A549 (cell line): ENCODE measurements at regions of chr20 and their contacts with region 1.

Region 1: DNA sequence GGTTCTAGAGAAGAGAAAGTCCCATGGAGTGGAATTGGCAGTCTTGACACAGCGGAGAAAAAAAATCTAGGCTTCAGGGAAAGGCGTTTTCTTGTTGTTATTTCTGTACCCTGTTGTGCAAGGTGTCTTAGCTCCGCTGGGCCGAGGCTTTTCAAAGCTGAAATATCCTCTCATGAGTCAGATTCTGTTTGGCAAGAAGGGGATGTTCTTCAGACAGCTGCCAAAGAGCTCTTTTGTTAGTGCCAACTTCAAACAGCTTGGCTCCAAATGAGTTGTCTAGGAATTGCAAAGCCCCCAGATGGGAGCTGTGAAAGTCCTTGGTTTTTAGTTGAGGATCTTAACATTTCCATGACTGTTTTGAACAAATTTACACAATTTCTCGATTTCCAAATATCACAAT is 45.6 kb downstream of the LRRN4 start:
- DNase-seq: peak; percentile 45 to 78
- ATAC-seq: 0 out of 6 replicates have a peak, but pooled peaks of 1 of the 2 experiments have one; percentile 36
- H3K4me3 ChIP-seq: peak overlapping the region; percentile 70; the same call in 2 of the 3 replicates
- H3K27ac ChIP-seq: peak overlapping the region in 1 of 2 experiments; percentile 8; a peak in 3 of 6 replicates
- H3K4me1 ChIP-seq: peaks cover 27% of the 10 kb centered on the region
- CTCF ChIP-seq: no peak
- EP300 ChIP-seq: no peak
- POLR2A ChIP-seq: no peak
- RAD21 ChIP-seq: no peak

Region 2: DNA sequence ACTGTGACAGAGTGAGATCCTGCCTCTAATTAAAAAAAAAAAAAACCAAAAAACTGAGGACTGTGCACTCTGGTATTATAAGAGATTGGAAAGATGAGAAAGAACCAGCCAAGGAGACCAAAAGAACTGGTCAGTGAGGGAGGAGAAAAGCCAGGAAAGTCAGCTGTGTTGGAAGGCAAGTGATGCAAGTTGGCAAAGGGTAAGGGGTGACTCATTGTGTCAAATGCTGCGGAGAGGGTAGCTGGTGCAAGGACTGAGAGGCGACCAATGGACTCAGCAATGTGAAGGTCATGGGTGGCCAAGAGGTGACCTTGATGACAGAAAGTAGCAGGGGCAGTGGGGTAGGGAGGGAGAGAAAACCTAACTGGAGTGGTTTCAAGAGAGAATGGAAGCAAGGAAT is 73.0 kb after region 1 on chr20:
- CTCF ChIA-PET with region 1: interaction called, 11 read pairs
- POLR2A ChIA-PET with region 1: no interaction called
- DNase-seq: no peak
- ATAC-seq: no peak
- H3K4me3 ChIP-seq: no peak overlapping the region
- H3K27ac ChIP-seq: no peak overlapping the region
- H3K4me1 ChIP-seq: no peaks in the 10 kb centered on the region
- CTCF ChIP-seq: no peak
- EP300 ChIP-seq: no peak
- POLR2A ChIP-seq: no peak
- RAD21 ChIP-seq: no peak